CD14-positive monocyte (primary cell): ENCODE measurements at regions of chr18 and their contacts with region 1.

Region 1: GRCh38 chr18:2776601-2777000 is 70.2 kb upstream of the EMILIN2 start:
- DNase-seq: no peak
- H3K4me3 ChIP-seq: no peak overlapping the region
- H3K4me3 Mint-ChIP-seq: no peak overlapping the region
- H3K27ac ChIP-seq: no peak overlapping the region
- H3K27ac Mint-ChIP-seq: no peak overlapping the region
- H3K4me1 ChIP-seq: no peaks in the 10 kb centered on the region
- H3K4me1 Mint-ChIP-seq: no peaks in the 10 kb centered on the region
- H3K27me3 ChIP-seq: no peaks in the 10 kb centered on the region
- H3K27me3 Mint-ChIP-seq: peaks cover 0 to 2% (median 0%) of the 10 kb centered on the region in 3 donors
- CTCF ChIP-seq: no peak

Region 2: DNA sequence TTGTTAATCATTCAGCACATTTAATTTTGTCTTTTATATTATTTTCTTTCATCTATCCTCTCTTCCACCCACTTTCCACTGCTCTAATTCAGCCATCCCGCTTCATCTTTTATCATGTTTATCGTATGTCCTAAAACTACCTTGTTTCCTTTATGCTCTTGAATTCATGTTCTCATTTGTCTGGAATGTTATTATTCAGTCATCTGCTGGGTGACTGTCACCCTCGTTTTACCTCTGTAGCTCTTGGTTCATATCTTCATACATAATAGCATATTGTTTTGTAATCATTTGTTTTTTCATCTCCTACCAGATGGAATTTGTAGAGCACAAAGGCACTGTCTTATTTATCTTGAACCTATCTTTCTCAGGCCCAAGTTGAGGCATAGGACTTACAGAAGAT is 84.1 kb before region 1 on chr18:
- intact Hi-C with region 1: loop called in 1 of 2 experiments (anchors 10 kb)
- DNase-seq: no peak
- H3K4me3 ChIP-seq: no peak overlapping the region
- H3K4me3 Mint-ChIP-seq: no peak overlapping the region
- H3K27ac ChIP-seq: peak overlapping the region in 1 of 2 donors; percentile 58
- H3K27ac Mint-ChIP-seq: peak overlapping the region in 2 of 7 donors; percentile 0 to 1
- H3K4me1 ChIP-seq: no peaks in the 10 kb centered on the region
- H3K4me1 Mint-ChIP-seq: no peaks in the 10 kb centered on the region
- H3K27me3 ChIP-seq: no peaks in the 10 kb centered on the region
- H3K27me3 Mint-ChIP-seq: no peaks in the 10 kb centered on the region
- CTCF ChIP-seq: no peak

Region 3: DNA sequence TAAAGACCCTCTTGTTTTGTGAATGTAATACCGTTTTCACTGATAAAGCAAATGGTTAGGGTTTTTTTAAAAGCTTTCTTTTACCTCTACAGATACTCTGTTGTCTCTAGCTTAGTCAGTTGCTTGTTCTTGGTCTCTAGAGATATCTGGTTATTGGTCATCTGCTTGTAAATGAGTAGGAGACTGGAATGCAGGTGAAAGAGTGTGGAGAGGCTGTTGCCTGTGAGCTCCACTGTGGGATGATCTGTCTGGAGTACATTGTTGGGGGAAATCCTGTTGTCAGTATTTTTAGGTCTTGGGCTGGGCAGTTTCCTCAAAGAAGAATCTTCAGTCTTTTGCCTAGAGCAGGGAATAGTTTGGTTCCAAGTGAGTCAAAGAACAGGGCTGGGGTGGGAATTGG is 53.4 kb before region 1 on chr18:
- intact Hi-C with region 1: loop called in 1 of 2 experiments (anchors 10 kb)
- DNase-seq: no peak
- H3K4me3 ChIP-seq: no peak overlapping the region
- H3K4me3 Mint-ChIP-seq: no peak overlapping the region
- H3K27ac ChIP-seq: no peak overlapping the region
- H3K27ac Mint-ChIP-seq: peak overlapping the region in 3 of 7 donors; percentile 29 to 67 (median 32)
- H3K4me1 ChIP-seq: no peaks in the 10 kb centered on the region
- H3K4me1 Mint-ChIP-seq: no peaks in the 10 kb centered on the region
- H3K27me3 ChIP-seq: no peaks in the 10 kb centered on the region
- H3K27me3 Mint-ChIP-seq: no peaks in the 10 kb centered on the region
- CTCF ChIP-seq: no peak

Region 4: DNA sequence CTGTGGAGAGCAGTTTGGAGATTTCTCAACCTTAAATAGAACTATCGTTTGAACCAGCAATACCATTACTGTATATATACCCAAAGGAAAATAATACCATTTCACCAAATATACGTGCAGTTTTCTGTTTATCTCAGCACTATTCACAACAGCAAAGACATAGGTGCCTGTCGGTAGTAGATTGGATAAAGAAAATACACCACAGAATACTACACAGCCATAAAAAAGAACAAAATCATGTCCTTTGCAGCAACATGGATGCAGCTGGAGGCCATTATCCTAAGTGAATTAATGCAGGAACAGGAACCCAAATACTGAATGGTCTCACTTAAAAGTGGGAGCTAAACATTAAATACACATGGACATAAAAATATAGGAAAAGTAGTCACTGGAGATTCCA is 39.8 kb before region 1 on chr18:
- intact Hi-C with region 1: loop called in 1 of 2 experiments (anchors 5 kb)
- DNase-seq: no peak
- H3K4me3 ChIP-seq: no peak overlapping the region
- H3K4me3 Mint-ChIP-seq: no peak overlapping the region
- H3K27ac ChIP-seq: no peak overlapping the region
- H3K27ac Mint-ChIP-seq: no peak overlapping the region
- H3K4me1 ChIP-seq: no peaks in the 10 kb centered on the region
- H3K4me1 Mint-ChIP-seq: no peaks in the 10 kb centered on the region
- H3K27me3 ChIP-seq: no peaks in the 10 kb centered on the region
- H3K27me3 Mint-ChIP-seq: no peaks in the 10 kb centered on the region
- CTCF ChIP-seq: no peak